Ovary (tissue), 10 donors: ENCODE measurements at regions of chr6 and their contacts with region 1.

Region 1: GRCh38 chr6:146065690-146066089 is 36.8 kb downstream of the GRM1 start:
- DNase-seq: no peak
- H3K4me3 ChIP-seq: no peak overlapping the region
- H3K27ac ChIP-seq: no peak overlapping the region
- H3K4me1 ChIP-seq: no peaks in the 10 kb centered on the region
- H3K27me3 ChIP-seq: no peaks in the 10 kb centered on the region
- CTCF ChIP-seq: no peak
- EP300 ChIP-seq: no peak
- POLR2A ChIP-seq: no peak

Region 2: GRCh38 chr6:144886682-144887081 is 1179.0 kb before region 1 on chr6:
- intact Hi-C with region 1: loop called in 1 of 4 experiments (anchors 5 kb)
- DNase-seq: no peak
- H3K4me3 ChIP-seq: no peak overlapping the region
- H3K27ac ChIP-seq: no peak overlapping the region
- H3K4me1 ChIP-seq: no peaks in the 10 kb centered on the region
- H3K27me3 ChIP-seq: no peaks in the 10 kb centered on the region
- CTCF ChIP-seq: no peak
- EP300 ChIP-seq: no peak
- POLR2A ChIP-seq: no peak